Left ventricle myocardium inferior (tissue), 1 donor: ENCODE measurements at regions of chr2 and their contacts with region 1.

Region 1: DNA sequence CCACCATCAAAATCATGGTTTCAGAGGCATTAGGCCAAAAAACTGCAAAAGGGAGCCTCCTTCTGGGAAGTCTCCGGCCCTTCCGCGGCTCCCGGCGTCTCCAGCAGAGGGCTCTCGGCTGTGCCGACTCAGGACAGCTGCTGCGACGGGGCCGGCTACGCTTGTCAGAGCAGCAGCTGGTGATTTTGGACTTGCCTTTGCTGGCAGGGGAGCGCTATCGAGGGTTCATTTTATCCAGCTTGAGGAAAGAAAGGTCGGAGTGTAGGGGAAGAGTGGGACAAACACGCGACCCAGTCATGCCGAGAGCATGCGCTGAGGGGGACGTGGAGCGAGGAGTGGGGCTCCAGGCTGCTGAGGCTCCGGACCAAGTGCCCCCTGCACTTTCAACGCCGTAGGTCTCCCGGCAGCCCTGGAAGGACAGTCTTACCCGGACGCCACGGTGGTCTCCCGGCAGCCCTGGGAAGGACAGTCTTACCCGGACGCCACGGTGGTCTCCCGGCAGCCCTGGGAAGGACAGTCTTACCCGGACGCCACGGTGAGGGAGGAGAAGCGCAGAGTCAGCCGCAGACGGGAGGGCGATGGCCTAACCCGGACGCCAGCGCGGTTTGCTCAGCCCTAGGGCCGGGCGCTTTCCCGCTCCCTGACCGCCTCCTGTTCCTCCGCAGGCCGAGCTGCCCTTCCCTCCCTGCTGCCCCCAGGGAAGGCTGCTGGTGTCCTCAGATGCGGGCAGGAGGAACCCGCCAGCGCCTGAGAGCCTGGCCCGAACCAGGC is 21.7 kb downstream of the DDX18 start:
- DNase-seq: peak; percentile 86
- H3K4me3 ChIP-seq: peak overlapping the region; percentile 66
- H3K27ac ChIP-seq: peak overlapping the region; percentile 63
- H3K4me1 ChIP-seq: peaks cover 16% of the 10 kb centered on the region
- H3K27me3 ChIP-seq: no peaks in the 10 kb centered on the region
- CTCF ChIP-seq: peak; percentile 89

Region 2: GRCh38 chr2:118003396-118003824 is 167.2 kb after region 1 on chr2:
- intact Hi-C with region 1: loop called (anchors 10 kb)
- DNase-seq: no peak
- H3K4me3 ChIP-seq: no peak overlapping the region
- H3K27ac ChIP-seq: no peak overlapping the region
- H3K4me1 ChIP-seq: peaks cover 16% of the 10 kb centered on the region
- H3K27me3 ChIP-seq: no peaks in the 10 kb centered on the region
- CTCF ChIP-seq: peak; percentile 90